Common myeloid progenitor, CD34-positive (primary cell): ENCODE measurements at regions of chr11 and their contacts with region 1.

Region 1: GRCh38 chr11:57530596-57531507 is at the start of gene TIMM10:
- DNase-seq: peak; percentile 97 to 98 (median 98)
- H3K4me3 ChIP-seq: peak within 1 kb of the TSS; percentile 62 to 96 (median 85)
- H3K27ac ChIP-seq: peak within 1 kb of the TSS; percentile 67 to 88
- H3K4me1 ChIP-seq: peaks cover 7 to 32% (median 19%) of the 10 kb centered on the region in 4 experiments
- H3K27me3 ChIP-seq: no peaks in the 10 kb centered on the region

Region 2: GRCh38 chr11:57345555-57346211 is 185.2 kb before region 1 on chr11:
- CTCF ChIA-PET with region 1: interaction called, 63 read pairs
- POLR2A ChIA-PET with region 1: no interaction called
- DNase-seq: peak; percentile 60 to 71 (median 61)
- H3K4me3 ChIP-seq: no peak overlapping the region
- H3K27ac ChIP-seq: no peak overlapping the region
- H3K4me1 ChIP-seq: peaks cover 0 to 11% (median 2%) of the 10 kb centered on the region in 4 experiments
- H3K27me3 ChIP-seq: no peaks in the 10 kb centered on the region

Region 3: GRCh38 chr11:57480409-57481137 is 50.3 kb before region 1 on chr11:
- CTCF ChIA-PET with region 1: interaction called, 410 read pairs
- POLR2A ChIA-PET with region 1: no interaction called
- DNase-seq: peak in 2 of 3 donors; percentile 72 to 73
- H3K4me3 ChIP-seq: no peak overlapping the region
- H3K27ac ChIP-seq: no peak overlapping the region
- H3K4me1 ChIP-seq: peaks cover 18 to 62% (median 55%) of the 10 kb centered on the region in 4 experiments
- H3K27me3 ChIP-seq: peaks cover 0 to 4% (median 0%) of the 10 kb centered on the region in 5 experiments

Region 4: DNA sequence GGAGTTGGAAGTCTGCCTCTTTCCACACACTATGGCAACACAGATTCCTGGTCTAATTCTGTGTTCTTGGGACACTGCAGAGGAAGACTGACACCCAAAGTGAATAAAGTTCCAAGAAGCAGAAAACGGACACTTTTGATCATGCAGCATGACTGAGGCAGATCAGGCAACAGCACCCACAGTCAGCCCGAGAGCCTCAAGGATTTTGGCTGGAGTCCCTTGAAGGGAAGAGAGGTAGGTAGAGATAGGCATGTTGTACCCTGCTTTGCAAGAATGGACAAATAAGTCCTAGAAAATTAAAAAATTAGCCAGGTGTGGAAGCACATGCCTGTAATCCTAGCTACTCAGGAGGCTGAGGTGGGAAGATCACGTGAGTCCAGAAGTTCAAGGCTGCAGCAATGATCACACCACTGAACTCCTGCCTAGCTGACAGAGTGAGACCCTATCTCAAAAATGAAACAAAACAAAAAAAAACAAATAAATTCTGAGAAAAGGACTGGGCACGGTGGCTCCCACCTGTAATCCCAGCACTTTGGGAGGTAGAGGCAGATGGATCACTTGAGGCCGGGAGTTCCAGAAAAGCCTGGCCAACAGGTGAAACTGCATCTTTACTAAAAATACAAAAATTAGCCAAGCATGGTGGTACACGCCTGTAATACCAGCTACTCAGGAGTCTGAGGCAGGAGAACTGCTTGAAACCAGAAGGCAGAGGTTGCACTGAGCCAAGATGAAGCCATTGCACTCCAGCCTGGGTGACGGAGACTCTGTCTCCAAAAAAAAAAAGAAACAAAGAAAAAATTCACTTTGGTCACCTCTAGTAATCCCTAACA is 22.3 kb before region 1 on chr11:
- CTCF ChIA-PET with region 1: interaction called, 132 read pairs
- POLR2A ChIA-PET with region 1: no interaction called
- DNase-seq: no peak
- H3K4me3 ChIP-seq: no peak overlapping the region
- H3K27ac ChIP-seq: no peak overlapping the region
- H3K4me1 ChIP-seq: peaks cover 0 to 11% (median 7%) of the 10 kb centered on the region in 4 experiments
- H3K27me3 ChIP-seq: no peaks in the 10 kb centered on the region

Region 5: GRCh38 chr11:57546869-57547475 is 16.1 kb after region 1 on chr11:
- CTCF ChIA-PET with region 1: interaction called, 10 read pairs
- POLR2A ChIA-PET with region 1: no interaction called
- DNase-seq: no peak
- H3K4me3 ChIP-seq: no peak overlapping the region
- H3K27ac ChIP-seq: no peak overlapping the region
- H3K4me1 ChIP-seq: peaks cover 0 to 12% (median 12%) of the 10 kb centered on the region in 4 experiments
- H3K27me3 ChIP-seq: no peaks in the 10 kb centered on the region